ENCODE measurements at regions of chr4 and their contacts with region 1.

Region 1: GRCh38 chr4:147786031-147786430 is 54.1 kb downstream of the ARHGAP10 start:
- DNase-seq: no peak
- ATAC-seq: no peak
- H3K4me3 ChIP-seq: no peak overlapping the region
- H3K27ac ChIP-seq: peak overlapping the region; percentile 79
- H3K4me1 ChIP-seq: peaks cover 59% of the 10 kb centered on the region
- H3K27me3 ChIP-seq: no peaks in the 10 kb centered on the region
- CTCF ChIP-seq: no peak

Region 2: DNA sequence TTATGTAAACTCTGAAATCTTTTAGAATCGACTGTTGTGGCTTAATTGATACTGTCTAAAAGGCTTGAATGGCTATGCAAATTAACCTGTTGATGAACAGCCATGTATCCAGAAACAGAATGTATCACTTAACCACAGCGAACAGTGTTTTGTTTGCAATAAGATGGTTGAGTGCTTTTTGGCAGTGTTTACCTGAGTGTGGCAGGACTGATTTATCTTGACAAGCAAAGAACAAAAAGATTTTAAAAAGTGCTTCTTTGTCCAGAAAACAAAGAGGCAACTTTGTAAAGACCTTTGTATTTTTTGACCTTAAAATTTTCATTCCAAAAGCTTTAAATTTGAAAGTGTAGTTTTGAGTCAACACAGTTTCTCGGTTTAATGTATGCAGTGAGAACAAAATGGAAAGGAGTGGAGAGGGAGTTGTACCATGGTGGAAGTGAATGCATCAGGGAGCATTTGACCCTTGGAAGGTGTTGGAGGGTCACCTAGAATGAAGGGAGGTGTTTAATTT is 36.2 kb before region 1 on chr4:
- intact Hi-C with region 1: no loop called
- DNase-seq: no peak
- ATAC-seq: no peak
- H3K4me3 ChIP-seq: no peak overlapping the region
- H3K27ac ChIP-seq: no peak overlapping the region
- H3K4me1 ChIP-seq: peaks cover 28% of the 10 kb centered on the region
- H3K27me3 ChIP-seq: no peaks in the 10 kb centered on the region
- CTCF ChIP-seq: no peak

Region 3: DNA sequence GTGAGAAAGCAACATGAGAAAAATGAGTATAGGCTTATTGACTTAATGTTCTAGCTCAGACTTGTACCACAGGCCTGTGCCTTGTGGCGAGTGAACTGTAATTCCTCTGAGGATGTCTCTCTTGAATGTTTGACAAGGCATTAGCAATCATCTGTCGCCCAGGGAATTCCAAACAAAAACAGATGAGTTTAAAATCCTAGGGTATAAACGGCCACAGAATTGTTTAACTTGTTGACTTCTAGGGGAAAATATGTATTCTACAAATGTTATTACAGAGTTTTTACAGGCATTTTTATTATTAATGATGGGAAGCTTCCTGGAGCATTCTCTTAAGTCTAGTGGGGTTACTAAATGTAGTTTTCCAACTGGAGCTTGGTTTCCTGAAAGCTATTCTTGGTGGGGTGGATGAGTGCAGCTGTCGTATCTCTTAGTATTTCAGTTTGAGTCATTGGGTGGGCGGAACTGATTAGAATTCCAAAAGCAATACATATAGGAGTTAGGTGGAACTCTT is 13.5 kb before region 1 on chr4:
- intact Hi-C with region 1: loop called in 1 of 2 experiments (anchors 2 kb)
- DNase-seq: no peak
- ATAC-seq: peak; percentile 68 to 76 (median 76)
- H3K4me3 ChIP-seq: peak overlapping the region; percentile 13
- H3K27ac ChIP-seq: peak overlapping the region; percentile 90
- H3K4me1 ChIP-seq: peaks cover 84% of the 10 kb centered on the region
- H3K27me3 ChIP-seq: no peaks in the 10 kb centered on the region
- CTCF ChIP-seq: no peak

Region 4: DNA sequence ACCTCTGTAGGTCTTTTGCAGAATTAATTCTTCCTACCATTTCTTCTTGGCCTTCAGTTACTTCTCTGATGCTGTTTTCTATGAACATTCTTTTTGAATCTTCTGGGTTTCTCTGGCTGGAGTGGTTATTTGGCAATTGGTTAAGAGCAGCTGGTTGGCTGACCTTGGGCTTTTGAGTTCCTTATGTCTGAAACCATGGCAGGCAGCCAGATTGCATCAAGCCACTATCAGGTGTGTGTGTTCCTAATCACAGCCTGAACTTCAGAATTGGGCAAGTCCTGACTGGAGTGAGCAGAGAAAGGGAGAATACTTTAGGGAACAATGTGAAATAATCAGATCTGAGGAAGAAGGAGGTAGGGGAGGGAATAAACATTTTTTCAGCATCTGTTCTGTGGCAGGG is 36.1 kb after region 1 on chr4:
- intact Hi-C with region 1: loop called in 1 of 2 experiments (anchors 5 kb)
- DNase-seq: peak; percentile 83 to 91
- ATAC-seq: peak; percentile 64 to 82 (median 79)
- H3K4me3 ChIP-seq: no peak overlapping the region
- H3K27ac ChIP-seq: peak overlapping the region; percentile 81
- H3K4me1 ChIP-seq: peaks cover 61% of the 10 kb centered on the region
- H3K27me3 ChIP-seq: no peaks in the 10 kb centered on the region
- CTCF ChIP-seq: no peak

Region 5: DNA sequence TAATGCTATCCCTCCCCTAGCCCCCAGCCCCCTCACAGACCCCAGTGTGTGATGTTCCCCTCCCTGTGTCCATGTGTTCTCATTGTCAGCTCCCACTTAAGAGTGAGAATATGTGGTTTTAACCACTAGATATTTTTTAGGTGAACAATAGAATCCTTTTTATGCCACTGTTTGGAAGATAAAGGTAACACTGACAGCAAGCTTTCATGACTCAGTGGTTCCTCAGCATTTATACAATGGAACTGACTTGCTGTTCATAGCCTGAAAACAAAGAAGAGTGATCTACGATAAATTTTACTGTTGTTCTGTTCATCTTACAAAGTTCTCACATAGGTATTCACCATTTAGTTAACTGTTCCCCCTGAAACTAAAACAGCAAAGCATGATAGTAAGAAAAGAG is 93.6 kb after region 1 on chr4:
- intact Hi-C with region 1: no loop called
- DNase-seq: no peak
- ATAC-seq: no peak
- H3K4me3 ChIP-seq: no peak overlapping the region
- H3K27ac ChIP-seq: no peak overlapping the region
- H3K4me1 ChIP-seq: no peaks in the 10 kb centered on the region
- H3K27me3 ChIP-seq: no peaks in the 10 kb centered on the region
- CTCF ChIP-seq: no peak